Motor neuron (in vitro differentiated cells): ENCODE measurements at regions of chr1 and their contacts with region 1.

Region 1: DNA sequence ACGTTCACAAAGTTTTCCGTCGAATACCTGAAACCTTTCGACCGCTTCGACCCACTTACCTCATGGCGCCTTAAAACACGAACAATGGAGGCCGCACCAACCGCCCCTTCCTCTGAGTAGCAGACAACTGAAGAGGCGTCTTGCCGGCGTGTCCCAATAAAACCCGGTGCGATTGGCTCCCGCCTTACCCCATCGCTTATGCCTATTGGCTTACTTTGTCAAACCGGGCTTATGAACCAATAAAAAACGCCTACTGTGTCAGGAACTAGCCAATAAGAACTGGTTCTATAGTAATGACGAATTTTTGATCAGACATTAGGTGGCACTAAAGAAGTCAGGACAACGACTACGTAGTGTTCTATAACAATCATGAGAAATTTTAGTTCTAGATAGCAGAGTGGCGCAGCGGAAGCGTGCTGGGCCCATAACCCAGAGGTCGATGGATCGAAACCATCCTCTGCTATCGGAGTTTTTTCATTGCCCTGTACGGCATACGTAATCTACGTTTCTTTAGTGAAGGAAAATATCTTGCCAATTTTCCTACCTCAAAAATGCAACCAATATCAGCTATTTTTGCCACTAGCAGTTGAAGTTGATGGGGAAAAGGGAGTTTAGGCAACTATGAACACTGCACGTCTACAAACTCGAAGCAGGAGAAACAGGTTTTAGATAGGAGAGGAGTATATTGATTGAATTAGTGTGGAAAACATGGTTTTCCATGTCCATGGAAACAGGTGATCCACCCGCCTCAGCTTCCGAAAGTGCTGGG is at the start of gene ILF2:
- ATAC-seq: peak; percentile 91 to 95 (median 92)
- H3K4me3 ChIP-seq: peak within 1 kb of the TSS; percentile 65 to 87 (median 76)
- H3K27ac ChIP-seq: peak within 1 kb of the TSS; percentile 89 to 90
- H3K4me1 ChIP-seq: peaks cover 8 to 9% of the 10 kb centered on the region in 2 donors
- total RNA-seq, gene ILF2: 116 to 542 (median 228) TPM

Region 2: DNA sequence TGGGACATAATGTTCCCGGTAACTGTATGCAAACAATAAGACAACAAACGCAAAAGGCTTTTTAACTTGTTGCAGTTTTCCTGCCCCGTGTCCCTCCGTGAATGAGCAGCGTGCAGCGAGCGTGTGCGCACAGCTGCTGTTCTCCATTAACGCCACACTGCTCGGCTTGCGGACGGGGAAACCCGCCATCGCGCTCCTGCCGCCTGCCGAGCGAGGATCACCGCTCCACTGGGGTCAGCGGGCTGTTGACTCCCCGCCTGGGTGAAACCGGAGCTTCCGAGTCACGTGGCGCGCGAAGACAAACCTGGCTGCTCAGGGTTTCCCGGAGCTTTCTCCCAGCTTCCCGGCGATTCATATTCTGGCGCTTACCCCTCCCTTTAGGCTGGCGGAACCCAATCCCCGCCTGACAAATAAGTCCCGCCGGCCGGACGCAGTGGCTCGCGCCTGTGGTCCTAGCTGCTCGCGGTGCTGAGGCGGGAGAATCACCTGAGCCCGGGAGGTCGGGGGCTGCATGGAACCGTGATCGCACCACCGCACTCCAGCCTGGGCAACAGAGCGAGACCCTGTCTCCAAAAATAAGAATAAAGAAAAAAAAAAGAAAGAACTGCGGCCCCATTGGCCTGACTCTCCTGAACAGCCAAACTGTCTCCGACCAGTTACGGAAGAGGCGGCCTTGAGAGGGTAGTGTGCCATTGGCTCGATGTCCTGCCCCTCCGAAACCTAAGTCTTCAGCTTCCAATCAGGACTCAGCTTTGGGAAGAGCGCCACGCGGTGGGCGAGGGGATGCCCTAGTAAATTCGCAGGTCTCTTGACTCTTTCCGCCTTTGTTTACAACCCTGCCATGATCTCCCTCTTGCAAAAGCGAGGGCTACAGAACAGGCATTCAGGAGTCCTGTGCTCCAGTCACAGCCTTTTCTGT is 296.3 kb after region 1 on chr1 and contains the start of gene CREB3L4:
- in situ Hi-C with region 1: loop called in 2 of 9 experiments (anchors 10 to 25 kb)
- ATAC-seq: peak; percentile 71 to 87 (median 83)
- H3K4me3 ChIP-seq: peak within 1 kb of the TSS; percentile 43 to 64 (median 54)
- H3K27ac ChIP-seq: peak within 1 kb of the TSS; percentile 73 to 83
- H3K4me1 ChIP-seq: peaks cover 19 to 20% of the 10 kb centered on the region in 2 donors
- total RNA-seq, gene CREB3L4: 7.1 to 30.0 (median 19.5) TPM

Region 3: DNA sequence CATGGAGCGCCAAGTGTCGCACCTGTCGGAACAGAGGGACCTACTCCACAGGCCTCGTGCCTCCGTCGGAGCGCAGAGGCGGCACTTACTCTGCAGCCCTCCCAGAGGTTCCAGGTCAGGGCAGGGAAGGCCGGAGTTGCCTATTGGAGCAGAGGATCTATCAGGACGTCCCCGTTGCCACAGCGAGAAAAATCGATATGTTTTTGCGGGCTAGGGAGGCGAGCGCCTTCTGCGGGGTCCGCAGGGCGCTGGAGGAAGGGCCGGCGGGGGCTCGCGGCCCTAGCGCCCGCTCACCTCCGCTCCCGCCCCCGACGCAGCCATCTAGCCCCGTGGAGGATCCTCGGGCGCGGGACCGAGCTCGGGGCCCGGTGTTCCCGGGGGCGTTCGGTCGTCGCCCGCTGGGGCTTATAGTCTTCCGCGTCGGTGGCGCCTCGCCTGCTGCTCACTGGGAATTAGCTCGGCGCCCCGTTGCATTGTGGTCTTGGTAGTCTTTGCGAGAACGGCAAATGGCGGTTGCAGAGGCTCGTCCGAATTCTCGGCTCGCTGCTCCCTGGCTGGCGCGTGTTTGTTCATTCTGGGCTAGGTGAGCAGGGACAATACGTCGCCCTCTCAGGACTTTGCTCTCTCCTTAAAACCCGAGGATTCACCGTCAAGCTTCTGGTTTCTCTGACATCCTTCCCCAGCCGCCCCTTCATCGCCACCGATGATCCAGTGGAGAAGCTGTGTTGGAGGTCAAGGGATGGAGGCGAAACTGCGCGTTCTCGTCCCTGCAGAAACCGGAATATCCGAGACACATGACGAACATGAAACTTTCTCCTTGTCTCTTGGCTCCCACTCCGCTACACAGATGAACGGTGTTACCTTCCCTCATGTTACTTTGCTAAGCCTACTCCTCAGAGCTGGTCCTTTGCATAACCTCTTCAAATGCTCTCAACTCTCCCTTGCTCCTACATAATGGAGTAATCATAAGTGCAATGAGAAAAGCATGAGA is 306.5 kb after region 1 on chr1 and contains the start of gene JTB:
- in situ Hi-C with region 1: loop called in 5 of 9 experiments (anchors 10 to 25 kb)
- ATAC-seq: peak; percentile 88 to 93 (median 92)
- H3K4me3 ChIP-seq: peak within 1 kb of the TSS; percentile 53 to 95 (median 83)
- H3K27ac ChIP-seq: peak within 1 kb of the TSS; percentile 85 to 91
- H3K4me1 ChIP-seq: peaks cover 8 to 19% of the 10 kb centered on the region in 2 donors
- total RNA-seq, gene JTB: 78.1 to 140 (median 109) TPM